CD4-positive, alpha-beta T cell (primary cell): ENCODE measurements at regions of chr1 and their contacts with region 1.

Region 1: DNA sequence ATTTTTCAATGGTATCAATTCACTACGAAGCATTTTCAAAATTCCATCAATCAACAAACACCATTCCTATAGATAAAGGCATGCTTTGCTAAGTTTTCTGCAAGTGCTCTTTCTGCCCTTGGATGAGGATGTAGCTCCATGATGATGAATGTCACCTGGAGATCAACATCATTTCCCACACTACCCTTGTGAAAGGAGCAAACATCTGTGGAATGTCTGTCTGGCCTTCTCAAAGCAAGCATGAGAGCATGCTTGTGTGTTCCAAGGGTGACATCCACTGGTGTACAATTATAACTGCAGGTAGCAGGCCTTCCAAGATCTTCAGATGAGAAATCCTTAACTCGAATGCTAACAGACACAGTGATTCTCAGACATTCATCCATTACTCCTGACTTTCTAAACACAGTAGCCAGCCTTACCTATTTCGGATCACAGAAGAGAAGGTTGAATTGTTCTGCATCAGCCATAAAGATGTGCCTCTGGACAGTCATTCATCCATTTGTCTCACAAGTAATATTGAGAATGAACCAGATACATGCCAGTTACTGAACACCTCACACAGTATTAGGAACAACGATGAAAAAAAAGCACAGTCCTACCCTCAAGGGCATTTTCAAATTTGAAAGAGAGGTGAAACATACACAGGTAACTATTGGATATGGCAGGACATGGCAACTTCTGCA is 162.4 kb downstream of the TPR start:
- DNase-seq: peak in 4 of 14 experiments; percentile 8 to 57 (median 42)
- ATAC-seq: no peak
- H3K4me3 ChIP-seq: no peak overlapping the region
- H3K4me3 Mint-ChIP-seq: no peak overlapping the region
- H3K27ac ChIP-seq: no peak overlapping the region
- H3K27ac Mint-ChIP-seq: no peak overlapping the region
- H3K4me1 ChIP-seq: no peaks in the 10 kb centered on the region
- H3K4me1 Mint-ChIP-seq: no peaks in the 10 kb centered on the region
- H3K27me3 ChIP-seq: peaks cover 0 to 11% of the 10 kb centered on the region in 2 experiments
- H3K27me3 Mint-ChIP-seq: peaks cover 58% of the 10 kb centered on the region
- CTCF ChIP-seq: peak; percentile 23

Region 2: DNA sequence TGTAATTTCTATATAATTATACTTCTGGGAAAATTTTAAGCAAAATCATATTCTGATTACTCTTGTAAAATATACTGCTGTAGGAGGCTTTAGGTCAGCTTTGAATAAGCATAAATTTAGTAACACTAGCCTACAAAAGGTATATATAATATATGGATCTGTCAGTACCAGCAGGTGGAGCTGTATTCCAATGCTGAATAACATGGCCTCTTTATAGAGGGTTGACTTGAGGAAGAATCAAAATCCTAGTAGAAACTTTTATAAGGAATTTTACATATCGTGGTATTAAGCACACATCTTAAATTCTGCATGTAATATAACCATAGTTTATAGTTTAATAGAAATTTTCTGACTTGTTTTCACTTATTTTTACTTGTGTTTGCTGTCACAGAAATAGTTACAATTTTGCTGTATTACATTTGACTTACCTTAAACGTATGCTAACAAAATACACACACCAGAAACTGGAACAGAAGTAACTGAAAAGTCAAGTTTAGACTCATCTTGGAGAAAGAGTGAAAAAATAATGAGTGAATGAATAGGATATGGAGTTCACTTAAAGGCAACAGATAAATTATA is 399.2 kb before region 1 on chr1:
- CTCF ChIA-PET with region 1: no interaction called
- POLR2A ChIA-PET with region 1: no interaction called
- intact Hi-C with region 1: loop called in 1 of 2 experiments (anchors 1 kb)
- DNase-seq: peak in 3 of 14 experiments; percentile 20 to 32 (median 26)
- ATAC-seq: no peak
- H3K4me3 ChIP-seq: no peak overlapping the region
- H3K4me3 Mint-ChIP-seq: no peak overlapping the region
- H3K27ac ChIP-seq: no peak overlapping the region
- H3K27ac Mint-ChIP-seq: no peak overlapping the region
- H3K4me1 ChIP-seq: no peaks in the 10 kb centered on the region
- H3K4me1 Mint-ChIP-seq: no peaks in the 10 kb centered on the region
- H3K27me3 ChIP-seq: no peaks in the 10 kb centered on the region
- H3K27me3 Mint-ChIP-seq: peaks cover 15% of the 10 kb centered on the region
- CTCF ChIP-seq: peak; percentile 53

Region 3: GRCh38 chr1:186009039-186009737 is 203.5 kb before region 1 on chr1:
- CTCF ChIA-PET with region 1: no interaction called
- POLR2A ChIA-PET with region 1: no interaction called
- intact Hi-C with region 1: no loop called
- DNase-seq: no peak
- ATAC-seq: no peak
- H3K4me3 ChIP-seq: no peak overlapping the region
- H3K4me3 Mint-ChIP-seq: no peak overlapping the region
- H3K27ac ChIP-seq: no peak overlapping the region
- H3K27ac Mint-ChIP-seq: no peak overlapping the region
- H3K4me1 ChIP-seq: no peaks in the 10 kb centered on the region
- H3K4me1 Mint-ChIP-seq: peaks cover 11% of the 10 kb centered on the region
- H3K27me3 ChIP-seq: no peaks in the 10 kb centered on the region
- H3K27me3 Mint-ChIP-seq: no peaks in the 10 kb centered on the region
- CTCF ChIP-seq: no peak